ENCODE measurements at regions of chr1 and their contacts with region 1.

Region 1: DNA sequence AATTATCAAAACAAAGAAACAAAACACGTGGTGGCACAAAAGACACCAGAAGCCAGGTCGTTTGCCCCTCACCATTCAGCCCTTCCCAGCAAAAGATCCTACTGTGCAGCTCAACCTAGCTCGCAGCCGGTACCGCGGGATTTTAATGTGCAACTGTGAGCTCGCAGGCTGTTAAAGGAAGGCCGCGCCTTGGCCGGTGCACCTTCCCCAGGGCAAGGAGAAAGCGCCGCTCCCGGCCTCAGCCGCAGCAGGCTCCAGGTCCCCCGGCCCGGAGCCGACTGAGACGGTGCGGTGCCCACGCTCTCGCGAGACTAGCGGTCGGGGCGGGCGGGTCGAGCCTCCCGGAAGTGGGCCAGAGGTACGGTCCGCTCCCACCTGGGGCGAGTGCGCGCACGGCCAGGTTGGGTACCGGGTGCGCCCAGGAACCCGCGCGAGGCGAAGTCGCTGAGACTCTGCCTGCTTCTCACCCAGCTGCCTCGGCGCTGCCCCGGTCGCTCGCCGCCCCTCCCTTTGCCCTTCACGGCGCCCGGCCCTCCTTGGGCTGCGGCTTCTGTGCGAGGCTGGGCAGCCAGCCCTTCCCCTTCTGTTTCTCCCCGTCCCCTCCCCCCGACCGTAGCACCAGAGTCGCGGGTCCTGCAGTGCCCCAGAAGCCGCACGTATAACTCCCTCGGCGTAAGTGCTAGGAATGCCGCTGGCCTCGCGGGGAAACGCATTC is at the start of gene AGL:
- DNase-seq: peak; percentile 92
- H3K4me3 Mint-ChIP-seq: peak within 1 kb of the TSS; percentile 94
- H3K27ac Mint-ChIP-seq: peak within 1 kb of the TSS; percentile 82
- H3K4me1 Mint-ChIP-seq: peaks cover 27% of the 10 kb centered on the region
- H3K27me3 Mint-ChIP-seq: no peaks in the 10 kb centered on the region
- total RNA-seq, gene AGL: 19.0 to 19.7 TPM

Region 2: DNA sequence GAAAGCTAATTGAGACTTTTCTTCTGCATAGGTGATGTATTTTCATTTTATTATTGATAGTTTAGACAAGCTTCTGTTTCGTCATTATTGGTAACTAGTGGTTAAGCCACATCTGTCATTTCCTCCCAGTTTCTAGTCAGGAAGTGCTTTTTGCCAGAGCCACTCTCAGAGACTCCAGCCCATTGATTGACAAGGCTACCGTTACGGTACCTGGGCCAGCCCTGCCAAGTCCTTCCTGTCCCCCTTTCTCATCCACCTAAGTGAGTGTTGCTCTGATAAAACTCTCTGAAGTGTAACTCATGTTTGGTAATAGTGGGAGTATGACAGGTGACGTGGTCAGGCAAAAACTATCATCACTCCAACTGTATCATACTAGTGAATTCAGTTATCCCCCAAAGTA is 29.4 kb before region 1 on chr1:
- CTCF ChIA-PET with region 1: no interaction called
- POLR2A ChIA-PET with region 1: no interaction called
- intact Hi-C with region 1: loop called (anchors 2 kb)
- DNase-seq: peak; percentile 60
- H3K4me3 Mint-ChIP-seq: no peak overlapping the region
- H3K27ac Mint-ChIP-seq: peak overlapping the region; percentile 63
- H3K4me1 Mint-ChIP-seq: peaks cover 12% of the 10 kb centered on the region
- H3K27me3 Mint-ChIP-seq: no peaks in the 10 kb centered on the region

Region 3: DNA sequence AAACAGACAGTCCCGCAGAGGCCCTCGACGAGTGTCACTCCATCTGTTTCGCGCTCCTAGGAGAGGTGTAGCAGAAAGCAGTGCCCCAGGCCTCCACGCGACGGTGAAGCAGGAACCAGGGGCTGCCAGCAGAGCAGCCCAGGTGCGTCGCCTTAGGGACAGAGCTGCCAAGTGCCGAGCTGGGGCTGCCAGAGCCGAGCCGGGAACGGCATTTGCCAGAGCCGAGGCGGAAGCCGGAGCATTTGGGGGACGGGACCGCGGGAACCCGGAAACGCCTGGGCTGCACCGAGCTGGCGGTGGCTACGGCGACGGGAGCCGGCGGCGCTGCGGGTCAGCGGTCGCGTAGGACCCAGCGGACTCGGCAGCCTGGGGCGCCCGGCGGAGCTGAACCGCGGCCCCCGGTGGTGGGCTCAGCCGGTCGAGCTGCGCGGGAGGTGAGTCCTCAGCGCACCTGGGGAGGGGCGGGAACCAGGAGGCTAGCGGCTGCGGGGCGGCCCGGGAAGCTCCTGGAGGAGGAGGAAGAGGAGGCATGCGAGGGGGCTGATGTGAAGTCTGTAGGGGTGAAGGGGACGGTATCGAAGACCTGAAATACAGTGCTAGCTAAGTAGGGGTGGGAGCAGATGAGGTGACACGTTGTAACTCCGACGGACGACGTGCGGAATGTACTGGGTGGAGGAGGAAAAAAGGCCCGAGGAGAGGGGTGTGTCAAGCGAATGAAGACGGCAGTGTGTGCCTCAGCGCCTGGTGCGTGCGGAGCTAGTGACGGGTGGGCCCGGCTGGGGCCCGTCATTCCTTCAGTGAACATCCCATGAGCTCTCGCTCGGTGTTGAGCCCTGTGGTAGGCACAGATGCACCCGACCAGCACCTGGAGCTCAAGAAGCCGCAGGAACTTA is 120.1 kb after region 1 on chr1 and contains the start of gene SLC35A3:
- CTCF ChIA-PET with region 1: no interaction called
- POLR2A ChIA-PET with region 1: no interaction called
- intact Hi-C with region 1: loop called (anchors 1 kb)
- DNase-seq: peak; percentile 88
- H3K4me3 Mint-ChIP-seq: peak within 1 kb of the TSS; percentile 100
- H3K27ac Mint-ChIP-seq: peak within 1 kb of the TSS; percentile 88
- H3K4me1 Mint-ChIP-seq: peaks cover 18% of the 10 kb centered on the region
- H3K27me3 Mint-ChIP-seq: no peaks in the 10 kb centered on the region
- total RNA-seq, gene SLC35A3: 16.5 to 18.3 TPM